B cell (primary cell): ENCODE measurements at regions of chrX and their contacts with region 1.

Region 1: GRCh38 chrX:119693040-119693995 is at the start of gene SEPTIN6:
- DNase-seq: peak; percentile 92
- ATAC-seq: peak; percentile 66
- H3K4me3 ChIP-seq: peak within 1 kb of the TSS; percentile 69 to 78 (median 71)
- H3K4me3 Mint-ChIP-seq: peak within 1 kb of the TSS; percentile 90
- H3K27ac ChIP-seq: peak within 1 kb of the TSS; percentile 71 to 99
- H3K27ac Mint-ChIP-seq: peak within 1 kb of the TSS; percentile 91
- H3K4me1 ChIP-seq: peaks cover 68 to 77% of the 10 kb centered on the region in 2 donors
- H3K4me1 Mint-ChIP-seq: peaks cover 60% of the 10 kb centered on the region
- H3K27me3 ChIP-seq: no peaks in the 10 kb centered on the region
- H3K27me3 Mint-ChIP-seq: no peaks in the 10 kb centered on the region
- CTCF ChIP-seq: peak; percentile 6
- total RNA-seq, gene SEPTIN6: 290 and 310 TPM in 2 replicates

Region 2: GRCh38 chrX:119537487-119537886 is 155.8 kb before region 1 on chrX:
- CTCF ChIA-PET with region 1: no interaction called
- POLR2A ChIA-PET with region 1: no interaction called
- intact Hi-C with region 1: no loop called
- DNase-seq: no peak
- ATAC-seq: no peak
- H3K4me3 ChIP-seq: no peak overlapping the region
- H3K4me3 Mint-ChIP-seq: no peak overlapping the region
- H3K27ac ChIP-seq: no peak overlapping the region
- H3K27ac Mint-ChIP-seq: no peak overlapping the region
- H3K4me1 ChIP-seq: no peaks in the 10 kb centered on the region
- H3K4me1 Mint-ChIP-seq: no peaks in the 10 kb centered on the region
- H3K27me3 ChIP-seq: no peaks in the 10 kb centered on the region
- H3K27me3 Mint-ChIP-seq: no peaks in the 10 kb centered on the region
- CTCF ChIP-seq: no peak

Region 3: DNA sequence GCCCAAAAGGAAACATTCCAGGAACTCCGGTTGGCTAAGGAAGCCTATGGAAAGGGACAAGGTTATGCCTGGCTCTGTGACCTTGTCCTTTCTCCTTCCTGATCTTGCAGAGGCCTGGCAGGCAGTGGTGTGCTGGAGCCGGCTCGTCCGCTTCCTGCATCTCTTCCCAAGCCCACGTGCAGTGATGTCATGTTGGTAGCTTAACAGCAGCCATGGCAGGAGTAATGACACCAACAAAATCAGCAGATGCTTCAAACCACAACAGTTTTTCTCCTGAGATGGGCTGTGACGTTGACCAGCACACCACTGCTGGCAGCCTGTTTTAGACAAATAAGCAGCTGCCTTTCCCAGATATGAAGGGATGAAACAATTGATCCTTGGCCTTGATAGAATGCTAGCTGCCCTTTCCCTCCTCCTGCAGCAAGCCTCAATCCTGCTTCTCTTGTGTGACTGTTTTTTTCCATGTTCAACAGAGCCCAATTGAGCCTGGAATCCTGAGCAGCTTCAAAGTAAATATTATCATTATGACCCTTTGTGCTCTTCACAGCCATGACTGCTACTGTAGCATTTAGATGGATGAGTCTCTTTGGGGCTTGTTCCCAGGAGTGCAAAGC is 23.8 kb before region 1 on chrX:
- CTCF ChIA-PET with region 1: interaction called, 5 read pairs
- POLR2A ChIA-PET with region 1: interaction called, 12 read pairs
- intact Hi-C with region 1: no loop called
- DNase-seq: no peak
- ATAC-seq: no peak
- H3K4me3 ChIP-seq: no peak overlapping the region
- H3K4me3 Mint-ChIP-seq: no peak overlapping the region
- H3K27ac ChIP-seq: peak overlapping the region in 1 of 2 donors; percentile 10
- H3K27ac Mint-ChIP-seq: peak overlapping the region; percentile 41
- H3K4me1 ChIP-seq: peaks cover 25 to 31% of the 10 kb centered on the region in 2 donors
- H3K4me1 Mint-ChIP-seq: peaks cover 28% of the 10 kb centered on the region
- H3K27me3 ChIP-seq: no peaks in the 10 kb centered on the region
- H3K27me3 Mint-ChIP-seq: no peaks in the 10 kb centered on the region
- CTCF ChIP-seq: no peak

Region 4: GRCh38 chrX:119676949-119677653 is 16.2 kb before region 1 on chrX:
- CTCF ChIA-PET with region 1: interaction called, 11 read pairs
- POLR2A ChIA-PET with region 1: interaction called, 24 read pairs
- intact Hi-C with region 1: loop called (anchors 1 kb)
- DNase-seq: no peak
- ATAC-seq: no peak
- H3K4me3 ChIP-seq: peak overlapping the region in 1 of 5 experiments; percentile 35
- H3K4me3 Mint-ChIP-seq: peak overlapping the region; percentile 59
- H3K27ac ChIP-seq: peak overlapping the region; percentile 64 to 84
- H3K27ac Mint-ChIP-seq: peak overlapping the region; percentile 93
- H3K4me1 ChIP-seq: peaks cover 64 to 73% of the 10 kb centered on the region in 2 donors
- H3K4me1 Mint-ChIP-seq: peaks cover 52% of the 10 kb centered on the region
- H3K27me3 ChIP-seq: no peaks in the 10 kb centered on the region
- H3K27me3 Mint-ChIP-seq: no peaks in the 10 kb centered on the region
- CTCF ChIP-seq: no peak